ENCODE measurements at regions of chr17 and their contacts with region 1.

Region 1: GRCh38 chr17:39199820-39200069 is 338 bp upstream of the RPL19 start:
- DNase-seq: peak; percentile 75 to 90 (median 82)
- H3K4me3 ChIP-seq: peak overlapping the region; percentile 43 to 100 (median 96)
- H3K27ac ChIP-seq: peak overlapping the region; percentile 93 to 100 (median 99)
- H3K27me3 ChIP-seq: no peaks in the 10 kb centered on the region
- CTCF ChIP-seq: peak in 3 of 56 donors; percentile 10 to 11 (median 10)

Region 2: DNA sequence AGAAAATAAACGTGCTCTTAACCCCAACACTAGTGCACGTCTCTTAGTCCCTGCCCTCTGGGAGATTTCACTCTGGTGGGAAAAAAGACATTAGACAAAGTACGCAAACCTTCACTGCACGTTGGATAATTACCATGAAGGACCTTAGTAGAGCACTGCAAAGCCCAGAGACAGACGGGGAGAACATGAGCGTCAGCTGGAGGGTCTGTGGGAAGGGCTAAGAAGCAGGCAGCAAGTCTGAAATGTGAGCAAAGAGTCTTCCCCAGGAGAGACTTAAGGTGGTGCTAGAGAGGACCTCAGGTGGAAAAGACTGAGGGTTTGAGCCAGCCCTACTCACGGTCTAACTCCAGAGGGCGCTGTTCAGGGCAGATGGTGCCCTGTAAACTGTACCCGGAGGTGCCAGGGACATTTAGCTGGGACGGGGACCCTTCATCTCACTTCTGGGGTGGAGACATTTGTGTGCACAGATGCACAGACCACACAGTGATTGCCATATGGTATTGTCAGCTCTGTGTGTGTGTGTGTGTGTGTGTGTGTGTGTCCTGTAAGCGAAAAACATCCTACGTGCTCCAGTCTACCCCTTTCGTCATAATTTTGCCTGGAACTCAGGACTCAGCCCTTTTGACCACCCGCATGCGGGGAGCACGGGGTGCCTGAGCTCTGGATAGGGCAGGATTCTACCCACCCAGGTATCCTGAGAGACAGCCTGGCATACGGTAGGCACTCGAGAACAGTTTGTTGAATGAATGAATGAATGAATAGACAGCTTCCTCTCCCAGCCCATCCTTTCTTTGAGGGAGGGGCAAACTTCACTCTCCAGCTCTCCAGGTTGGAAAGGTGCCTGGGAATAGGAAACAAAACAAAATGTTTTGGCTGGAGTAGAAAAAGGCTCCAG is 36.1 kb after region 1 on chr17:
- intact Hi-C with region 1: loop called in 1 of 2 experiments (anchors 5 kb)
- DNase-seq: peak in 3 of 10 donors; percentile 40 to 48 (median 41)
- H3K4me3 ChIP-seq: no peak overlapping the region
- H3K27ac ChIP-seq: no peak overlapping the region
- H3K27me3 ChIP-seq: peaks cover 0 to 14% (median 0%) of the 10 kb centered on the region in 45 donors
- CTCF ChIP-seq: peak in 51 of 56 donors; percentile 17 to 67 (median 46)

Region 3: GRCh38 chr17:39461113-39461925 is 261.6 kb after region 1 on chr17 and contains the start of gene CDK12:
- intact Hi-C with region 1: loop called in 1 of 2 experiments (anchors 5 kb)
- DNase-seq: peak; percentile 90 to 99 (median 95)
- H3K4me3 ChIP-seq: peak within 1 kb of the TSS; percentile 61 to 99 (median 91)
- H3K27ac ChIP-seq: peak within 1 kb of the TSS; percentile 79 to 99 (median 95)
- H3K27me3 ChIP-seq: no peaks in the 10 kb centered on the region
- CTCF ChIP-seq: peak in 16 of 56 donors; percentile 7 to 50 (median 20)
- total RNA-seq, gene CDK12: 39.8 to 91.0 (median 63.5) TPM